ENCODE measurements at regions of chr5 and their contacts with region 1.

Region 1: DNA sequence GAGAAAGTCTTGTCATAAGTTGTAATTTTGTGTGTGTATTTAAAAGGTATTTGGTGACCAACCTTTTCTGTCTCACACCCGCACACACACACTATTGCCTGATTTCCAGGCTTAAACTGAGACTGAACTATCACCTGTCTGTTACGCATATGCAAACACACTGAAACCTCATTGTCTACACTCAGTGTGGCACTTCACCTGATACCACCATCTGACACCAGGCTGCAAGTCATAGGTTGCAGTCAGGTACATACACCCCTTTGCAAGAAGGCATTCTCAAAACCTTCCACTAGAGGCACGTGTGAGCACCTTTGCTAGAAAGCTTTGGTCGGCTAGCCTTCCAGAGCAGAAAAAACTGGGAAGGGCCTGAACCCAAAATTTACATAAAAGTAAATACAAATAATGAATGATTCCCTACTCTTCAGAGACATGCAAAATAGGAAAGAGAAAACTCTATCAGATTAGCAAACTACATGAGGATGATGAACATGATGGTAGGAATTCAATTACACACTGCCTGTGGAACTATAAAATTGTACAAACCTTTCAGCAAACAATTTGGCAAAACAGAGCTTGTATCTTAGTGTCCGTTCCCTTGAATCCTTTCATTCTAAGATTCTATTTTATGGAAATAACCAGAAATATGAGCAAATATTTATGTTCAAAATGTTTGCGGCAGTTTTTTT is 5.9 kb upstream of the FOXD1 start:
- DNase-seq: peak in 11 of 42 donors; percentile 12 to 61 (median 34)

Region 2: DNA sequence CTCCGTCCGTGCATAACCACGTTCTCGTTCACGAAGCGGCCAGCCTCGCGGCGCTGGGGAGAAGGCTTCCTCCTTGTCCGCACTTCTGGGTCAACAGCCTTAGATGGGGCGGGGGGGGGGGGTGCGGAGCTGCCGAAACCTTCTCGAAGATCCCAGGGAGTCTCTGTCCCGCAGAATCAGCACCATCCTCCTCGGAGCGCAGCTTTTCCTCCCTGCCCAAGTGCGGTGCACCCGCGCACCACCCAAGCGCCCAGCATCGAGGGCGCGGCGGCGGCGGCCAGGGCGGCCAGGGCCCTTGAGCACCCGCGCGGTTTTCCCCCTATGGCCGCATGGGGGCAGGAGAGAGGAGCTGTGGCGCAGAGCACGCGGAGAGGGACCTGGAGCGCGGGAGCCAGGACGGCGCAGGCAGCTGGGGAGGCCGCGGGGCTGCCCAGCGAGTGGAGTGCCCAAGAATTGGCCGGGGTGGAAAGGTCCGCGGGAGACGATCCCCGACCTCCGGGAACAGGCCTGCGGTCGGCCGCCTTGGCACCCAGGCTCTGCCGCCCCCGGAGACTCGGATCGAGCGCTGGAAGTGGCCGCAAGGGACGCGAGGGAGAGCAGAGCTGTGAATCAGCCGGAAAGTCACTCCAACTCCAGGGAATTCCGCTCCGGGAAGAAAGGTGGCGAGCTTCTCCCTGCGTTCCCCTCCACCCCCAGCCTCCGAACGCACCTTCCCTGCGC is 238.4 kb before region 1 on chr5:
- intact Hi-C with region 1: loop called (anchors 5 kb)
- DNase-seq: peak in 41 of 42 donors; percentile 25 to 86 (median 67)

Measured in head of caudate nucleus (tissue), 42 donors.